ENCODE measurements at regions of chr19 and their contacts with region 1.

Region 1: DNA sequence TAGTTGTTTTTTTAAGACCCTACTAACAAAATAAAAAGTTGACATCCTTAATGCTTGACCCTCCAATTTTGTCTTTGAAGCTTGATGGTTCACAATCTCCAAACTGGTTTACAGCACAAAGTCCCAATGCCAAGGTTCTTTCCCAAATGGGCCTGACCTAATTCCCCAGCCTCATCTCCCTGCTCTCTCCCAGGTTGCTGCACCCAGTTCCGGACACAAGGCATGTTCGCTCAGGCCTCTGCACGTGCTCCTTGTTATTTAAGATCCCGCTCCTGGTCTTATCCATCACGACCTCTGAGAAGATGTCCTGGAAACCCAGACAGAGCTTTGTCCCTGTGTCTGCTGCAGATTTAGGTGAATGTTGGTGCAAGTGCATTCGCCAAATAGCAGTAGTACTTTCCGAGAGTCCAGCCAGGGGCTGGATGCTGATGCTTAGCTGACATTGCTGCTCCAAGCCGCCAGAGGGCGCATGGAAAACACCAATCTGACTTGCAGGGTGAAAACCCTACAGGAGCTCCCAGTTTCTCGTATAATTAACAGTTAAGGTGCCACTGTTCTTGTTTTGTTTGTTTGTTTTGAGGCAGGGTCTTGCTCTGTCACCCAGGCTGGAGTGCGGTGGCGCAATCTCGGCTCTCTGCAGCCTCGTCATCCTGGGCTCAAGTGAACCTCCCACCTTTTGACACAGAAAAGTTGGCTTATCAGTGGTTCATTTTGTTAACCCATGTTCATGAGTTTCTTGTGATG is 18.5 kb downstream of the LYPD3 start:
- DNase-seq: peak; percentile 87
- H3K4me3 Mint-ChIP-seq: no peak overlapping the region
- H3K27ac Mint-ChIP-seq: no peak overlapping the region
- H3K4me1 Mint-ChIP-seq: peaks cover 11% of the 10 kb centered on the region
- H3K27me3 Mint-ChIP-seq: no peaks in the 10 kb centered on the region
- CTCF ChIP-seq: peak; percentile 91

Region 2: GRCh38 chr19:43457809-43458208 is 10.9 kb after region 1 on chr19:
- CTCF ChIA-PET with region 1: interaction called, 39 read pairs
- POLR2A ChIA-PET with region 1: interaction called, 6 read pairs
- intact Hi-C with region 1: no loop called
- DNase-seq: no peak
- H3K4me3 Mint-ChIP-seq: no peak overlapping the region
- H3K27ac Mint-ChIP-seq: no peak overlapping the region
- H3K4me1 Mint-ChIP-seq: peaks cover 10% of the 10 kb centered on the region
- H3K27me3 Mint-ChIP-seq: no peaks in the 10 kb centered on the region
- CTCF ChIP-seq: no peak

Region 3: DNA sequence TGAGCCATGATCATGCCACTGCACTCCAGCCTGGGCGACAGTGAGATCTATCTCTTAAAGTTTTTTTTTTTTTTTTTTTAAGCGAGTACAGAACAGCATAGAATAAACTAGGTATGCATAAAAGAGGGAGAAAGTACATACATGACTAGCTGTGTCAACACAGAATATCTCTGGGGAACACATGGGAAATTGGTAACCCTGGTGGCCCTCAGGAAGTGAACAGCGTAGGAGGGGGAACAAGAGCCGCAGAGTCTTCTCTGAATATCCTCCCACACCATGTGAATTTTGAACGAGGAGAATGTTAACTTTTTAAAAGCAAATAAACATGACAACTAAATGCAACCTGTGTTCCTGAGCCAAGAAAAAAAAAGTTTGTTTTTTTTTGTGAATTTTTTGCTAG is 42.4 kb after region 1 on chr19:
- CTCF ChIA-PET with region 1: interaction called, 3 read pairs
- POLR2A ChIA-PET with region 1: no interaction called
- intact Hi-C with region 1: loop called (anchors 1 kb)
- DNase-seq: no peak
- H3K4me3 Mint-ChIP-seq: no peak overlapping the region
- H3K27ac Mint-ChIP-seq: no peak overlapping the region
- H3K4me1 Mint-ChIP-seq: no peaks in the 10 kb centered on the region
- H3K27me3 Mint-ChIP-seq: no peaks in the 10 kb centered on the region
- CTCF ChIP-seq: no peak

Region 4: DNA sequence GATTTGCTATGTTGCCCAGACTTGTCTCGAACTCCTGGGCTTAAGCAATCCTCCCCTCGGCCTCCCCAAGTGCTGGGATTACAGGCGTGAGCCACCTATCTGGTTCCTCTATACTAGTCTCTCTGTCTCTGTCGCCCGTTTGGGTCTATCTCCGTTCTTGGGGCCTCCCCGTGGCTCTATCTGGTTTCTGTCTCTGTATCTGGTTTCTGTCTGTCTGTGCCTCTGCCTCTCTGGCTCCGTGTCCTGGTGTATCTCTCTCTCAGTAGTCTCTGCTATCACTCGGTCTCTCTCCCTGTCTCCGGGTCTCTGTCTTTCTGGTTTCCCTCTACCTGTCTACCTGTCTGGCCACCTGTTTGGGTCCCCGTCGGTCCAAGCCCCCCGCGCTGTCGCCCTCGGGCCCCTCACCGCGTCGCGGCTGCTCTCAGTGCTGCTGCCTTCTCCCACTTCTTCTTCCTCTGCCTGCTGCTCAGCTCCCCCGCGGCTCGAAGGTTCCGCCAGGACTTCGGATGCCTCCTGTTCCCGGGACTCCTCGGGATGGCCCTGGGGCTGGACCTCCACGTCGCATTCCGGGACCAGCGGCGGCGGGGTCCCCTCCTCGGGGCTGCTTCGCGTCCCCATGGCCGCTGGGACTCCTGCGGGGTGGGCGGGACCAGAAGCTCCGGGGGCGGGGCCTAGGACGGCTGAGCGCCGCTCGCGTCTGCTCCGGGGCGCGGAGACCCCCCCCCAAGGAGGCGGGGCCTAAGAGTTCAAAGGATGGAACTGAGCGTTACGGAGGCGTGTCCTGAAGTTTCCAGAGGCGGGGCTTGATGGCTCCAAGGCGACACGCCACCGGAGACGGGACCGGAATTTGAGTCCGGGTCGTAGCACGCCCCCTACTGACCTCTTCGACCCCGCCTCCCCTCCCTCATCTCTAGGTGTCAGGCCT is 56.8 kb after region 1 on chr19:
- CTCF ChIA-PET with region 1: interaction called, 20 read pairs
- POLR2A ChIA-PET with region 1: interaction called, 12 read pairs
- intact Hi-C with region 1: loop called (anchors 1 kb)
- DNase-seq: peak; percentile 94
- H3K4me3 Mint-ChIP-seq: peak overlapping the region; percentile 90
- H3K27ac Mint-ChIP-seq: peak overlapping the region; percentile 87
- H3K4me1 Mint-ChIP-seq: peaks cover 11% of the 10 kb centered on the region
- H3K27me3 Mint-ChIP-seq: no peaks in the 10 kb centered on the region
- CTCF ChIP-seq: no peak

Region 5: DNA sequence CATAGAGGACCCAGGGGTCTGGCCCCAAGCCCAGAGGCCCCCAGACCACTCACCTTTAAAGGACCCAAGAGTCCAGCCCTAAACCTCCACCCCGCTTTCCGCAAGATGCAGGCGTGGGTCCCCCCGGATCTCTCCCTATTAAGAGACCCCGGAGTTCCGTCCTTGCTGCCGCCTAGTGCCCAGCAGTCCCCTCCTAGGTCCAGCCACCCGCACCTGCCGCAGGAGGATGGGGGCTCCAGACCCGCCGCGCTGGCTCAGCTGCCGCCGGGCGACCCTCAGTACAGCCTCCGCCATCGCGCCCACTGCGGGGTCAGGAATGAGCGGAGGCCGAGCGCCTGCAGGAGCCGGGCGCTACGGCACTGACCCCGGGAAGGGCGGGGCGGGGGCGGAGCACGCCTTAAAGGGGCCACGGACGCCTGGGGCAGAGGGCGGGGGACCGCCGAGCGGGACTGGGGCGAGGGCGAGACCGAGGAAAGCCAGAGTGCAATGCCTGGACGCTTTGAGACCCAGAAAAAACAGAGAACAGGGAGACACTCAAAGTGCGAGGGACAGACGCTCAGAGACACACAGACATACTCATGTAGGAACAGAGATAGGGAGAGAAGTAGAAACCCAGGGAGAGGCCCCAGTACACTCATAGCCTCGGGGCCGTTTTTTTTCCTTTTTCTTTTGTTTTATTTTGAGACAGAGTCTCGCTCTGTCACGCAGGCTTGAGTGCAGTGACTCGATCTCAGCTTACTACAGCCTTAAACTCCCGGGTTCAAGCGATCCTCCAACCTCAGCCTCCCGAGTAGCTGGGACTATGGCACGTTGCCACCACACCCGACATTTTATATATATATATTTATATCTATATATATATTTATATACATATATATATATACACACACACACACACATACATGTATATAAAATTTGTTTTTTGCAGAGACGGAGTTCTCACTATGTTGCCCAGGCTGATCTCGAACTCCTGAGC is 80.3 kb after region 1 on chr19 and contains the start of gene ETHE1:
- CTCF ChIA-PET with region 1: interaction called, 261 read pairs
- POLR2A ChIA-PET with region 1: interaction called, 4 read pairs
- intact Hi-C with region 1: no loop called
- DNase-seq: peak; percentile 76
- H3K4me3 Mint-ChIP-seq: peak within 1 kb of the TSS; percentile 84
- H3K27ac Mint-ChIP-seq: peak within 1 kb of the TSS; percentile 88
- H3K4me1 Mint-ChIP-seq: peaks cover 26% of the 10 kb centered on the region
- H3K27me3 Mint-ChIP-seq: no peaks in the 10 kb centered on the region
- CTCF ChIP-seq: no peak
- total RNA-seq, gene ETHE1: 78.0 and 94.4 TPM in 2 replicates

Region 6: GRCh38 chr19:43651758-43652545 is 205.0 kb after region 1 on chr19:
- CTCF ChIA-PET with region 1: interaction called, 10 read pairs
- POLR2A ChIA-PET with region 1: interaction called, 5 read pairs
- intact Hi-C with region 1: loop called (anchors 1 kb)
- DNase-seq: peak; percentile 75
- H3K4me3 Mint-ChIP-seq: no peak overlapping the region
- H3K27ac Mint-ChIP-seq: peak overlapping the region; percentile 42
- H3K4me1 Mint-ChIP-seq: no peaks in the 10 kb centered on the region
- H3K27me3 Mint-ChIP-seq: no peaks in the 10 kb centered on the region
- CTCF ChIP-seq: peak; percentile 59